CD4-positive, alpha-beta T cell (primary cell): ENCODE measurements at regions of chr2 and their contacts with region 1.

Region 1: DNA sequence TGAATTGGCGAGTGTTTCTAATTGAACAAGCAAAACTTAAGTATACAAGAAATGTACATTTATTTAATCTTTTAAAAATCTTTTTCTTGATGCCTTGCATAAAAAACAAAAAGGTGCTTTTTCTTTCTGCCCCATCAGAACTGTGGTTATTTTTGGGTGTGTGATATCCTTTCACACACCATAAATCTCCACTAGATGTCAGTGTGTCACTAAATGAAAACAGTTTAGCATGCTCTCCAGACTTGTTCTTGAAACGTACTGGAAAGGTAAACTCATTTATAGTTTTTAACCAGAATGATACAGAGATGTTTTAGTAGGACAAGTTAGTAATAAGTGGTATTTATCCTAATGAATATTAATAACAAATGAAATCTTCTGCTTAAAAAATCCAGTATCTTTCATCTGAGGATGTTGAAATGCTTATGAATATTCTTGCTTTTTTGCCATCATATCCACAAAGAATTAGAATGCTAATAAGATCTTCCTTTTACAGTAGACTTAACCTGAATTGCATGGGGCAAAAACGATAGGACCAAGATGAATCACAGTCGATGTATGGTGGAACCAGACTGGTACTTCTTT is 96.8 kb downstream of the UBE2E3 start:
- DNase-seq: peak in 6 of 14 experiments; percentile 5 to 82 (median 42)
- ATAC-seq: peak; percentile 92
- H3K4me3 ChIP-seq: no peak overlapping the region
- H3K4me3 Mint-ChIP-seq: no peak overlapping the region
- H3K27ac ChIP-seq: no peak overlapping the region
- H3K27ac Mint-ChIP-seq: no peak overlapping the region
- H3K4me1 ChIP-seq: no peaks in the 10 kb centered on the region
- H3K4me1 Mint-ChIP-seq: no peaks in the 10 kb centered on the region
- H3K27me3 ChIP-seq: no peaks in the 10 kb centered on the region
- H3K27me3 Mint-ChIP-seq: no peaks in the 10 kb centered on the region
- CTCF ChIP-seq: peak; percentile 79

Region 2: DNA sequence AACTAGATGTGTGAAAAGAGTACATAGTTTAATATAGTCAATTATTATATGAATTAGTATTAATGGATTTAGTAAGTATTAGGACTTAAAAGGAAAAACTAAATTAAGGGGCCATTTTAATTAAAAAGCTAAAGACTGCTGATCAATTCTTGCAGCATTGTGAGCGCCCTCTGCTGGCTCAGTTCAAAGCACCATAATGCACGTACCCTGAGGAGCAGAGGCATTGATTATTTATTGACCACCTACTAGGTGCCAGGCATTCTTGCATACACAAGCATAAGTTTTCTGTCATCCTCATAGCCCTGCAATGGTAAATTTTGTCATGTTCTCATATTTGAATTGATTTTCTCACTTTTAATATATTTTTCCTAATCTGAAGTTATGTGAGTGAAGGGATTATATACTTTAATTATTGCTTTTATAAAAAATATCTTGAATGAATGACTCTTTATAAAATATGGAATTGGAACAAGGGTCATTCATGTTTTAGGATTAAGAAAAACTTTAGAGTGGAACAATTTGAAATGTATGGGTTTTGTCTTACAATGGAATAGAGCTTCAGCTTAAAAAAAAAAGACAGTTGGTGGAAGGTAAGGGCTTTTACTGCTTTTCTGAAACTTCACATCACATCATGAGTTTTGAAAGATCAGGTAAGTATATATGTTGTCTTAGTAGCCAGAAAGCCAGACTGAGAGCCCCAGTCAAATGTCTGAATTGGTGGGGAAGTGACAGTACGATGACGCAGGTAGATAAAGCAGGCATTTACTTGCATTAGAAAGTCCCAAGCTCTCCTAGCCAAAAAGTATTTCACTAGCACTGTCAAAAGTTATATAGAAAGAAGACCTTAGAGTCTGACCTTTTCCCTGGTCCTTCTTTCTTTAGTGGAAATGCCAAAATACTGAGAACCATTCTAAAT is 389.7 kb after region 1 on chr2:
- CTCF ChIA-PET with region 1: no interaction called
- POLR2A ChIA-PET with region 1: no interaction called
- intact Hi-C with region 1: loop called in 1 of 2 experiments (anchors 1 kb)
- DNase-seq: peak; percentile 63 to 89 (median 74)
- ATAC-seq: peak; percentile 65
- H3K4me3 ChIP-seq: no peak overlapping the region
- H3K4me3 Mint-ChIP-seq: peak overlapping the region; percentile 69
- H3K27ac ChIP-seq: peak overlapping the region; percentile 23 to 35
- H3K27ac Mint-ChIP-seq: peak overlapping the region; percentile 84
- H3K4me1 ChIP-seq: peaks cover 33% of the 10 kb centered on the region
- H3K4me1 Mint-ChIP-seq: peaks cover 89% of the 10 kb centered on the region
- H3K27me3 ChIP-seq: no peaks in the 10 kb centered on the region
- H3K27me3 Mint-ChIP-seq: no peaks in the 10 kb centered on the region
- CTCF ChIP-seq: peak; percentile 94

Region 3: GRCh38 chr2:181715033-181715630 is 637.9 kb after region 1 on chr2:
- CTCF ChIA-PET with region 1: interaction called, 3 read pairs
- POLR2A ChIA-PET with region 1: interaction called, 4 read pairs
- intact Hi-C with region 1: loop called (anchors 1 to 2 kb)
- DNase-seq: peak; percentile 30 to 86 (median 60)
- ATAC-seq: peak; percentile 80
- H3K4me3 ChIP-seq: no peak overlapping the region
- H3K4me3 Mint-ChIP-seq: no peak overlapping the region
- H3K27ac ChIP-seq: no peak overlapping the region
- H3K27ac Mint-ChIP-seq: no peak overlapping the region
- H3K4me1 ChIP-seq: no peaks in the 10 kb centered on the region
- H3K4me1 Mint-ChIP-seq: no peaks in the 10 kb centered on the region
- H3K27me3 ChIP-seq: no peaks in the 10 kb centered on the region
- H3K27me3 Mint-ChIP-seq: no peaks in the 10 kb centered on the region
- CTCF ChIP-seq: peak; percentile 72

Region 4: GRCh38 chr2:181904022-181904632 is 826.9 kb after region 1 on chr2:
- CTCF ChIA-PET with region 1: no interaction called
- POLR2A ChIA-PET with region 1: no interaction called
- intact Hi-C with region 1: loop called (anchors 5 kb)
- DNase-seq: peak in 3 of 14 experiments; percentile 48 to 59 (median 58)
- ATAC-seq: no peak
- H3K4me3 ChIP-seq: no peak overlapping the region
- H3K4me3 Mint-ChIP-seq: no peak overlapping the region
- H3K27ac ChIP-seq: no peak overlapping the region
- H3K27ac Mint-ChIP-seq: no peak overlapping the region
- H3K4me1 ChIP-seq: no peaks in the 10 kb centered on the region
- H3K4me1 Mint-ChIP-seq: peaks cover 23% of the 10 kb centered on the region
- H3K27me3 ChIP-seq: no peaks in the 10 kb centered on the region
- H3K27me3 Mint-ChIP-seq: no peaks in the 10 kb centered on the region
- CTCF ChIP-seq: peak; percentile 64

Region 5: GRCh38 chr2:182077451-182078142 is 1000.4 kb after region 1 on chr2:
- CTCF ChIA-PET with region 1: no interaction called
- POLR2A ChIA-PET with region 1: no interaction called
- intact Hi-C with region 1: loop called (anchors 5 to 10 kb)
- DNase-seq: peak in 3 of 14 experiments; percentile 19 to 42 (median 42)
- ATAC-seq: no peak
- H3K4me3 ChIP-seq: no peak overlapping the region
- H3K4me3 Mint-ChIP-seq: no peak overlapping the region
- H3K27ac ChIP-seq: no peak overlapping the region
- H3K27ac Mint-ChIP-seq: no peak overlapping the region
- H3K4me1 ChIP-seq: no peaks in the 10 kb centered on the region
- H3K4me1 Mint-ChIP-seq: no peaks in the 10 kb centered on the region
- H3K27me3 ChIP-seq: peaks cover 0 to 4% of the 10 kb centered on the region in 2 experiments
- H3K27me3 Mint-ChIP-seq: peaks cover 9% of the 10 kb centered on the region
- CTCF ChIP-seq: peak; percentile 51